ENCODE measurements at regions of chr19 and their contacts with region 1.

Region 1: DNA sequence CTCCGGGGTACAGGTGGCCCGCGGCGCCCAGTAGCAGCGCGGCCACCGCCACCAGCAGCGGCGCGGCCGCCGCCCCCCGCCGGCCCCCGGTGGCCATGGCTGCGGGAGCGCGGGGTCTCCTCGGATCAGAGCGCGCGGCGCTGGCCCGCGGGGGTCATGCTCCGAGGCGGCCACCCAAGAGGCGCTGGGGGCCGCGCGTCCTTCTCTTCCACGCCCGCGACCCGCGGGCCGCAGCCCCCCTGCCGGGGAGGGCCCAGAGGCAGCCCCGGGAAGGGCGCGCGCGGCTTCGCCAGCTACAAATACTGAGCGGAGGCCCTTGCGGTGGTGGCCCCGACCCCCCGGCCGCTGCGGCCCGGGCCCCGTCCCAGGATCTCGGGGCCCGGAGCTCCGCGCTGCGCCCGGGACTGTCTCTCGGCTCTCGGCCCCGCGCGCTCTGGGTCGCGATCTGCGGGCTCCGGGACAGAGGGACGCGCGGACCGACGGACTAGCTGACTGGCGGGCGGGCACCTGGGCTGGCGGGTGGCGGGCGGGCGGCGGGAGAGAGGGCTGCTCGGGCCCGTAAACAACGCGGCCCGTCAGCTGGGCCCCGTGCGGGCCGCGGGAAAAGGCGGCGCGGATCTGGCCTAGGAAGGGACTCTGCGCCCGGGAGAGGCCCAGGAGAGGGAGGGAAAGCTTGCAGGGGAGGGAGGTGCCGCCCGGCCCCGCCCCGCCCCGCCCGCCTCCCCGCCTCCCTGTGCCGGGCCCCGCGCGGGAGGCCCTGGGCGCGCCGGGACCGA is at the start of gene INSR:
- DNase-seq: peak; percentile 91 to 93 (median 92)
- ATAC-seq: peak; percentile 91 to 95 (median 94)
- H3K4me3 ChIP-seq: peak within 1 kb of the TSS; percentile 78 to 100 (median 98)
- H3K27ac ChIP-seq: peak within 1 kb of the TSS; percentile 87 to 99 (median 96)
- H3K4me1 ChIP-seq: peaks cover 0 to 34% (median 18%) of the 10 kb centered on the region in 12 donors
- H3K27me3 ChIP-seq: peaks cover 0 to 2% (median 0%) of the 10 kb centered on the region in 9 donors
- CTCF ChIP-seq: no peak
- POLR2A ChIP-seq: peak; percentile 23 to 63
- total RNA-seq, gene INSR: 73.7 to 221 (median 103) TPM

Region 2: DNA sequence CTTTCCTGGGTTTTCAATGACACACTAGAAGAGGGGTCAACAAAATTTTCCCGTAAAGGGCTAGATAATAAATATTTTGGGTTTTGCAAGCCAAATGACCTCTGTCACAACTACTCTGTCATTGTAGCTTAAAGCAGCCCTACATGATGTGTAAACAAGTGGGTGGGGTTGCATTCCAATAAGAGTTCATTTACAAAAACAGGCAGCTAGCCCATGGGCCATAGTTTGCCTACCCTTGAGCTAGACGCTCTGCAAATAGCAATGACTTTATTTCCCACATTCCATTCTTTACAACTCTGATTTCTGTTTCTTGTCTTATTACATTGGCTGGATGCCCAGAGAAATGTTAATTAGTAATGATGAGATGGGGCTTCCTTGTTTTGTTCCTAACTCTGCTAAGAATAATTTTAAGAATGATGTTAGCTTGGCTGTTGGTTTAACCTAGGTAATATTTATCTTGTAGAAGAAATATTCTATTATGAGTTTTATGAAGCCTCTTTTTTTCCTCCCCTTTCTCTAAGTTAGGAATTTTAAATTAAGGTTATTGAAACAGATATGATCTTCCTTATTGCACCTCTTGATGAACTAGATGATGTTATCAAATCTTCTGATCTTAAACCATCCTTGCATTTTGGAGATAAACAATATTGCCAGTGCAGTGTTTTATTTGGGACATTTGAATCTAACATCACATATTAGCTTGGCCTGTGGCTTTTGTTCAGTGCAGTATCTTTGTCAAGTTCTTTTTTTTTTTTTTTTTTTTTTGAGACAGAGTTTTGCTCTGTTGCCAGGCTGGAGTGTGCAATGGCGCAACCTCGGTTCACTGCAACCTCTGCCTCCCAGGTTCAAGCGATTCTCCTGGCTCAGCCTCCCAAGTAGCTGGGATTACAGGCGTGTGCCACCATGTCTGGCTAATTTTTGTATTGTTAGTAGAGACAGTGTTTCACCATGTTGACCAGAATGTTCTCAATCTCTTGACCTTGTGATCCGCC is 148.2 kb before region 1 on chr19:
- intact Hi-C with region 1: loop called in 6 of 10 experiments (anchors 1 to 10 kb)
- DNase-seq: no peak
- ATAC-seq: peak in 1 of 4 donors; percentile 23
- H3K4me3 ChIP-seq: no peak overlapping the region
- H3K27ac ChIP-seq: peak overlapping the region in 2 of 12 donors; percentile 2 to 30
- H3K4me1 ChIP-seq: peaks cover 0 to 4% (median 0%) of the 10 kb centered on the region in 12 donors
- H3K27me3 ChIP-seq: no peaks in the 10 kb centered on the region
- CTCF ChIP-seq: no peak
- POLR2A ChIP-seq: no peak

Region 3: GRCh38 chr19:7197760-7198696 is 96.0 kb before region 1 on chr19:
- intact Hi-C with region 1: loop called (anchors 1 to 2 kb)
- DNase-seq: peak; percentile 93 to 96 (median 94)
- ATAC-seq: peak; percentile 86 to 94 (median 92)
- H3K4me3 ChIP-seq: peak overlapping the region; percentile 43 to 83 (median 75)
- H3K27ac ChIP-seq: peak overlapping the region; percentile 73 to 90 (median 86)
- H3K4me1 ChIP-seq: peaks cover 0 to 36% (median 18%) of the 10 kb centered on the region in 12 donors
- H3K27me3 ChIP-seq: no peaks in the 10 kb centered on the region
- CTCF ChIP-seq: peak in 4 of 12 donors; percentile 11 to 33 (median 26)
- POLR2A ChIP-seq: peak; percentile 72 to 77

Region 4: DNA sequence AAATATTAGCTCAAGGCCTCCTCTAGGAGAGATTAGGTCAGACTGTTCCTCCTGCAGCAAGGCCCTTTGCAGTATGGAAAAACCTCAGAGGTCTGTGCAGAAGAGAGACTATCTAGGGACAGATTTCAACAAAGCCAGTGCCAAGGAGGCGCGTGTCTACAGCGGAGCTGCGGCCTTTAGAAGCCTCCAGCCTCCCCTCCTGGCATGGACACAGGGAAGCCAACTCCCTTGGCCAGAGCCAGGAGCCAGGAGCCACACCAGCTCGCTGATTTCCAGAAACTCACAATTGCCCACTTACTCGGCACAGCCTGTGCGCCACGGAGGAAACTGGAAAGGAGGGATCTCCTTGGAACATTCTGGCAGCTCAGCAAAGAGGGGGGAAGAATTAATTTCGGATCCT is 63.2 kb before region 1 on chr19:
- intact Hi-C with region 1: loop called in 2 of 10 experiments (anchors 5 kb)
- DNase-seq: peak; percentile 65 to 89 (median 71)
- ATAC-seq: peak; percentile 82 to 93 (median 89)
- H3K4me3 ChIP-seq: no peak overlapping the region
- H3K27ac ChIP-seq: peak overlapping the region in 9 of 12 donors; percentile 12 to 70 (median 49)
- H3K4me1 ChIP-seq: peaks cover 0 to 57% (median 36%) of the 10 kb centered on the region in 12 donors
- H3K27me3 ChIP-seq: no peaks in the 10 kb centered on the region
- CTCF ChIP-seq: no peak
- POLR2A ChIP-seq: no peak

Region 5: DNA sequence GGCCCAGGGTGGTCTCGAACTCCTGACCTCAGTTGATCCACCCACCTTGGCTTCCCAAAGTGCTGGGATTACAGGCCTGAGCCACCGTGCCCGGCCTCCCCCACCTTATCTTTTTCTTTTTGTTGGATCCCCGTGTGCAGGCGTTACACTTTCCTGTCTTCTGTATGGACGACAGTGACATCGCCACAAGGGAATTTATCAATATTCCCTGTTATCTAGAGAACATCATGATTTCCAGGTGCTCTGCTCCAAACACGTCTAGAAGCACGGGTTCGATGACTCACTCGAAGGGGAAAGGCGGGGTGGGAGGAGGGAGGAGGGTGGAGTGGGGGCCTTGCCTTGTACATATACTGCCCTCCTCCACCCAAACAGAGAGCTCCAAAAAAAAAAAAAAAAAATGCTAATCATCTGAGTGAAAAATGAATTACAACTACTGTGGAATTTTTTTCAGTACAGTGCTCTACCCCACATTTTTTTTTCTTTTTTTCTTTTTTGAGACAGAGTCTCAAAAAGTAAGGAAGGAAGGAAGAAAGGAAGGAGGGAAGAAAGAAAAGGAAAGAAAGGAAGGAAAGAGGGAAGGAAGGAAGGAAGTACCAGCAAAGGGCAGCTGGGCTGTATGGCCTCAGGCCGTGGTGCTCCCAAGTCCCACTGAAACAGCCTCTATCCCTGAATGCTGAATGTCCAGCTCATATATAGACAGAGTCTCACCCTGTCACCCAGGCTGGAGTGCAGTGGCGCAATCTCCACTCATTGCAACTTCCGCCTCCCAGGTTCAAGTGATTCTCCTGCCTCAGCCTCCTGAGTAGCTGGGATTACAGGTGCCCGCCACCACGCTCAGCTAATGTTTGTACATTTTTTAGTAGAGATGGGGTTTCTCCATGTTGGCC is 36.6 kb before region 1 on chr19:
- intact Hi-C with region 1: loop called in 1 of 10 experiments (anchors 5 kb)
- DNase-seq: peak in 1 of 5 donors; percentile 54
- ATAC-seq: peak in 3 of 4 donors; percentile 61 to 76 (median 62)
- H3K4me3 ChIP-seq: no peak overlapping the region
- H3K27ac ChIP-seq: peak overlapping the region in 8 of 12 donors; percentile 10 to 70 (median 30)
- H3K4me1 ChIP-seq: peaks cover 0 to 64% (median 33%) of the 10 kb centered on the region in 12 donors
- H3K27me3 ChIP-seq: no peaks in the 10 kb centered on the region
- CTCF ChIP-seq: no peak
- POLR2A ChIP-seq: no peak

Region 6: DNA sequence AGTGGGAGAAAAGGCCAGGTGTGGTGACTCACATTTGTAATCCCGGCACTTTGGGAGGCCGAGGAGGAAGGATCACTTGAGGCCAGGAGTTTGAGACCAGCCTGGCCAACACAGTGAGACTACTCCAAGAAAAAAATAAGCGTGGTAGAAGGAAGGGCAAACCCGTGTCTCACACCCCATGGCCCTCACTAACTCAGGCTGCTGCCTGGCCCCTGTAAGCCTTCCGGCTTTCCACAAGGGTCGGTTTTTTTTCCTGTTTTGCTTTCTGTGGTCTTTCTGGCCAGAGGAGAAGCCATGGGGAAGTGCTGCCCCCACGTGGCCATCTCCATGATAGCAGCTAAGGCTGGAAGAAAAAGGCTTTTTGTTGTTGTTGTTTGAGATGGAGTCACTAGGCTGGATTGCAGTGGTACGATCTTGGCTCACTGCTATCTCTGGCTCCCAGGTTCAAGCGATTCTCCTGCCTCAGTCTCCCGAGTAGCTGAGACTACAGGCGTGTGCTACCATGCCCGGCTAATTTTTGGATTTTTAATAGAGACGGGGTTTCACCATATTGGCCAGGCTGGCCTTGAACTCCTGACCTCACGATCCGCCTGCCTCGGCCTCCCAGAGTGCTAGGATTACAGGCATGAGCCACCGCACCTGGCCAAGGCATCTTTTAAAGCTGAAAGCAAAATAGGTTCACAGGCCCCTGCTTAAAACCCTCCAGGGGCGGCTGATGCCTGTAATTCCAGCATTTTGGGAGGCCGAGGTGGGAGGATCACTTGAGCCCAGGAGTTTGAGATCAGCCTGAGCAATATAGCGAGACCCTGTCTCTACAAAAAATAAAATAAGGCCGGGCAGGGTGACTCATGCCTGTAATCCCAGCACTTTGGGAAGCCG is 47.2 kb after region 1 on chr19:
- intact Hi-C with region 1: loop called in 1 of 10 experiments (anchors 2 kb)
- DNase-seq: peak; percentile 63 to 88 (median 75)
- ATAC-seq: peak in 3 of 4 donors; percentile 44 to 57 (median 48)
- H3K4me3 ChIP-seq: no peak overlapping the region
- H3K27ac ChIP-seq: no peak overlapping the region
- H3K4me1 ChIP-seq: peaks cover 0 to 46% (median 2%) of the 10 kb centered on the region in 12 donors
- H3K27me3 ChIP-seq: no peaks in the 10 kb centered on the region
- CTCF ChIP-seq: peak; percentile 90 to 98 (median 95)
- POLR2A ChIP-seq: no peak

Region 7: GRCh38 chr19:7460562-7460966 is 166.6 kb after region 1 on chr19:
- intact Hi-C with region 1: no loop called
- DNase-seq: no peak
- ATAC-seq: no peak
- H3K4me3 ChIP-seq: no peak overlapping the region
- H3K27ac ChIP-seq: no peak overlapping the region
- H3K4me1 ChIP-seq: no peaks in the 10 kb centered on the region
- H3K27me3 ChIP-seq: no peaks in the 10 kb centered on the region
- CTCF ChIP-seq: no peak
- POLR2A ChIP-seq: no peak

Region 8: GRCh38 chr19:8054169-8054568 is 760.2 kb after region 1 on chr19:
- intact Hi-C with region 1: no loop called
- DNase-seq: peak in 1 of 5 donors; percentile 22
- ATAC-seq: no peak
- H3K4me3 ChIP-seq: no peak overlapping the region
- H3K27ac ChIP-seq: no peak overlapping the region
- H3K4me1 ChIP-seq: peaks cover 0 to 14% (median 2%) of the 10 kb centered on the region in 12 donors
- H3K27me3 ChIP-seq: peaks cover 0 to 17% (median 9%) of the 10 kb centered on the region in 9 donors
- CTCF ChIP-seq: no peak
- POLR2A ChIP-seq: no peak